ENCODE measurements at regions of chr11 and their contacts with region 1.

Region 1: DNA sequence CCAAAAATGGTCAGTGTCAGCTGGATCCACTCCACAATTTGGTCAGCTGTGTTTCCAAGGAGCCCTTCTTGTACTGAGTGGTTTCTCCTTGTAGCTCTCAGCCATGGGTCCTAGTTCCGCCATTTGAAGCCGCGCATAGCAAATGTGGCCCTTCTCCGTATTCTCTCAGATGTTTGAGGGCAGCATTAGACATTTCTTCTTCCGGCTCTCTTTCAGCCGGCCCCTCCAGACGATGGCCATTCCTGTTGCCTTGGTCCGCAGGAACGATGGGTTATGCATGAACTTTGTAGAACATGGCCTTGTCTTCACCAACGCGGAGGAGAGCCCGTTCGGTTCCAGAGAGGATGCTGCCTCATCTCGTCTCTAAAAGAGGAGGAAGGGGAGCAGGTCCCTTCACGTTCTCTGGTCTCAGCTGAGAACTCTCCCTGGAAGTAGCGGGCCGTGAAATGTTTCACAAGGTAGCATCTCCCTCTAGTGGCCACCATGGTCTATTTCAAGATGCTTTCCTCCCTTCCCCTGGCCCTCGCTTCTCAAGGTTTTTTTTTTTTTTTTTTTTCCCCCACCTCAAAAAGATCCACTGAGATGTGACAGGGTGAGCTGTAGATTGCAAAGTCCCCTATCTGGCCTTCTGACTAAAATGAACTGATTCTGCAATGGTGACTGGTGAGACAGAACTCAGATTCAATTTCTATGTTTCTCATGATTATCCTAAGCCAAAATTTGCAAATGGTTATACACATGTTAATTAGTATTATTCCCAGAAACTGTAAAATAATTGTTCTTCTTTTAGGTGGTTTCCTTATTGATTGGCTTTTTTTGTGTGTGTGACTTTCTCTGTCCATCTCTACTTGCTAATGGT is 19.8 kb upstream of the PLET1 start:
- DNase-seq: peak; percentile 70
- H3K4me3 Mint-ChIP-seq: peak overlapping the region; percentile 85
- H3K27ac Mint-ChIP-seq: peak overlapping the region; percentile 73
- H3K4me1 Mint-ChIP-seq: peaks cover 34% of the 10 kb centered on the region
- H3K27me3 Mint-ChIP-seq: no peaks in the 10 kb centered on the region

Region 2: GRCh38 chr11:111586388-111586831 is 694.1 kb before region 1 on chr11:
- CTCF ChIA-PET with region 1: no interaction called
- POLR2A ChIA-PET with region 1: no interaction called
- DNase-seq: peak; percentile 40
- H3K4me3 Mint-ChIP-seq: no peak overlapping the region
- H3K27ac Mint-ChIP-seq: no peak overlapping the region
- H3K4me1 Mint-ChIP-seq: no peaks in the 10 kb centered on the region
- H3K27me3 Mint-ChIP-seq: peaks cover 4% of the 10 kb centered on the region

Region 3: GRCh38 chr11:111926505-111927391 is 353.7 kb before region 1 on chr11:
- CTCF ChIA-PET with region 1: interaction called, 12 read pairs
- POLR2A ChIA-PET with region 1: no interaction called
- DNase-seq: peak; percentile 97
- H3K4me3 Mint-ChIP-seq: peak overlapping the region; percentile 80
- H3K27ac Mint-ChIP-seq: peak overlapping the region; percentile 78
- H3K4me1 Mint-ChIP-seq: peaks cover 19% of the 10 kb centered on the region
- H3K27me3 Mint-ChIP-seq: peaks cover 14% of the 10 kb centered on the region

Region 4: DNA sequence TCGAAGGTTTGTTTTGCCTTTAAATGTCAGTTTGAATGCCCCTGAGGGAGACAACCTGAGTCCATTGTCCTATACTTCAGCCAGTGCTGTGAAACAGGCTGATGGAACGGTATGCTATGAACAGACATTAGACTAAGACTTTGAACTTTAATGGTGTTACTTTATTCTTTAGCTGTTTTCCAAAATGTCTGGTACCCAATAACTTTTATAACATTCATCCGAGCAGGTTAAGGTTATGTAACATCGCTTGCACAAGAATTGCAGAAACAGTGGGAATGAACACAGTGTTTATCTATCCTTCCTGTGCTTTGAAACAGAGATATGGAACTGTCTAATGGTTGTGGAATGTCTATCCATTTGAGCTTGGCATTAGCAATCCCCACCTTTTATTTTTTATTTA is 66.7 kb before region 1 on chr11:
- CTCF ChIA-PET with region 1: interaction called, 219 read pairs
- POLR2A ChIA-PET with region 1: no interaction called
- DNase-seq: no peak
- H3K4me3 Mint-ChIP-seq: no peak overlapping the region
- H3K27ac Mint-ChIP-seq: no peak overlapping the region
- H3K4me1 Mint-ChIP-seq: no peaks in the 10 kb centered on the region
- H3K27me3 Mint-ChIP-seq: peaks cover 10% of the 10 kb centered on the region

Region 5: DNA sequence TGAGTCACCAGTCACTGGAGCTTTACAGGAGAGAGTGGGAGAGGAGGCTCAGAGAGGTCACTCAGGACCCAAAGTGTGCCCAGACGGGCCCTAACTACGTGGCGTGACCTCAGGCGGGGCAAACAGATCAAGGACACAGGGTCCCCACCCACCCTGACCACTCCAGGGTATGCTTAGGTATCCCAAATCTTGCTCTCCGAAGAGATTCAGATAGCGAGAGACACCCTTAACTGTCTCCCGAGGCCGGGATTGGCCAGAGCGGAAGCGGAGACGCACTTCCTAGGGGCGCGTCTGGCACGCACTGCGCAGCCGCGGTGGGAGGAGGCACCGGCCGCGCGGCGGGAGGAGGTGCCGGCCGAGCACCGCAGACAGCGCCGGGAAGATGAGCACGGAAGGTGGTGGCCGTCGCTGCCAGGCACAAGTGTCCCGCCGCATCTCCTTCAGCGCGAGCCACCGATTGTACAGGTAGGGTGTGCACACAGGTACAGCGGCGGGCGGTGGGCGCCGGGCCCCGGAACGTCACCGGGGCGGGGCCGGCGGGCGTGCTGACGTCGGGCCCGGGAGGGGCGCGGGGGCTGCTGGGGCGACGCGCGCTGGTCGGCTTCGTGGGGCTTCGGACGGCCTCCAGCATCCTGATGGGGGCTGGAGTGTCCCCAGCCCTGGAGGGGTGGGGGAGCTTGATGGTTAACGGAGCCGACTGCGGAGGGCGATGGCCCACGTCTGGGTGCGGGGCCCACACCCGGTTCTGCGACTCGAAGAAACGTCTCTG is 54.3 kb before region 1 on chr11 and contains the start of gene PTS:
- CTCF ChIA-PET with region 1: interaction called, 219 read pairs
- POLR2A ChIA-PET with region 1: interaction called, 19 read pairs
- DNase-seq: peak; percentile 87
- H3K4me3 Mint-ChIP-seq: peak within 1 kb of the TSS; percentile 80
- H3K27ac Mint-ChIP-seq: peak within 1 kb of the TSS; percentile 90
- H3K4me1 Mint-ChIP-seq: peaks cover 32% of the 10 kb centered on the region
- H3K27me3 Mint-ChIP-seq: no peaks in the 10 kb centered on the region
- total RNA-seq, gene PTS: 20.5 to 22.9 TPM

Region 6: DNA sequence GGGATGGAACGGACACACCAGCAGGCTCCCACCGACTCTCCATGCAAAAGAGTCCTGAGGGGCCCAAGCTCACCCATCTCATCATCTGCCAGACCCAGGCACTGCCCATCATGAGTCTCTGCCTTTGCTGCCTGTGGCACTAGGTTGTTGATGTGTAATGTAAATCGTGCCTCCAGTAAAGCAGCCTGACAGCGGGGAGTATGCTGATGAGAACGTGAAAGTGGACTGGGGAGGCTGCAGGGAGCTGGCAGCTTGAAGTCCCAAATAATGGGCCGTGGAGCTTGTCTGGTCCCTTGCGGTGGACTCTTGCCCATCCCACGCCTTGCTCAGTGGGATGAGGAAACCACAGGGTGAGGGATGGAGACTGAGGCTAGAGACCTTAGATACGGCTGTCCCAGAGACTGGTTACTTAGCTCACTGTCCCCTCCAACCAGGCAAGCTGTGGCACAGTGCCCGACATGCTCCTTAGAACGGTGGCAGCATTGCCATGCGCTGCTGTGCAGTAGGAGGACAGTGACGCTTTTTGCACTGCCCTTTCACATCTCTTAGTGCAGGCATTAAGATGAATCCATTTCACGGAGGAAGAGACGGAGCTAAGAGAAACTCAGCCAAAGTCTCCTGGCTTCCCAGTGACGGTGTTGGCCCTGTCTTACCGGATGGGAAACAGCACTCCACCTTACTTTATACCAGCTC is 19.7 kb after region 1 on chr11:
- CTCF ChIA-PET with region 1: interaction called, 12 read pairs
- POLR2A ChIA-PET with region 1: no interaction called
- DNase-seq: no peak
- H3K4me3 Mint-ChIP-seq: no peak overlapping the region
- H3K27ac Mint-ChIP-seq: no peak overlapping the region
- H3K4me1 Mint-ChIP-seq: peaks cover 46% of the 10 kb centered on the region
- H3K27me3 Mint-ChIP-seq: no peaks in the 10 kb centered on the region

Region 7: GRCh38 chr11:112366777-112367176 is 86.3 kb after region 1 on chr11:
- CTCF ChIA-PET with region 1: no interaction called
- POLR2A ChIA-PET with region 1: no interaction called
- DNase-seq: no peak
- H3K4me3 Mint-ChIP-seq: no peak overlapping the region
- H3K27ac Mint-ChIP-seq: no peak overlapping the region
- H3K4me1 Mint-ChIP-seq: no peaks in the 10 kb centered on the region
- H3K27me3 Mint-ChIP-seq: no peaks in the 10 kb centered on the region

Measured in activated CD4-positive, alpha-beta memory T cell treated with anti-CD3 and anti-CD28 coated beads, Interleukin-2, amount 10 ng/mL, durations not matched to agents 7 days and 5 days (primary cell).